WTC11 (cell line): ENCODE measurements at regions of chr11 and their contacts with region 1.

Region 1: GRCh38 chr11:57800444-57801182 is 39.0 kb downstream of the CTNND1 start:
- DNase-seq: no peak
- ATAC-seq: peak; percentile 93
- H3K4me3 Mint-ChIP-seq: no peak overlapping the region
- H3K27ac Mint-ChIP-seq: peak overlapping the region; percentile 97
- H3K4me1 Mint-ChIP-seq: peaks cover 18% of the 10 kb centered on the region
- H3K27me3 Mint-ChIP-seq: no peaks in the 10 kb centered on the region
- CTCF ChIP-seq: peak; percentile 51

Region 2: DNA sequence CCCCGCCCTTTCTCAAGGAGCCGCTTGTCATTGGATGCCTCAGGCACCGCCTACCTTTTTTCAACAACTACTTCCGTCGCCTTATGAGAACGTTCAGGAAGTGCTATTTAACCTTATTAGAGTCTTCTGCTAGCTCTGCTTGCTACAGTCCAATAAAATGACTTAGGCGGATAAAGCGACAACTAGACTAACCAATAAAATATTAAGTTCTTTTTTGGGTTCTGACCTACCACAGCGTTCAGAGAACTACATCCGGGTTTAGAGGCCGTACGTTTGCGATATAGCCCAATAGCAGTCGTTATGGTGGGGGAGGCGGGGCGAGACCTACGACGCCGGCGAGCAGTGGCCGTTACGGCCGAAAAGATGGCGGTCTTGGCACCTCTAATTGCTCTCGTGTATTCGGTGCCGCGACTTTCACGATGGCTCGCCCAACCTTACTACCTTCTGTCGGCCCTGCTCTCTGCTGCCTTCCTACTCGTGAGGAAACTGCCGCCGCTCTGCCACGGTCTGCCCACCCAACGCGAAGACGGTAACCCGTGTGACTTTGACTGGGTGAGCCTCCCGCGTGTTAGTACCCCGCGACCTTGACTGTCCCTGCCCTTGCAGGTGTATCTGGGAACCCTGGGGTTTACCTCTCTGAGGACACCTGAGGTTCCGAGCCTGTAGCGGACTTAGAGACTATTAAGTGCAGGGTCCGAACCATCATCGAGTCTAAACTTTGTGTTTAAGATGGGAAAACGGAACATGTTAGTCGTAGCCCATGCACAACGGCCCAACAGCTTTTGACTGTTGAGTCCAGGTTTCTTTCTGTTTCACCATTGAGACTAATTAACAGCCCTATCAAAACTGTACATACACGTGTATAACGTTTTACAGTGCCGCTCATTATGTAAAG is 88.1 kb before region 1 on chr11 and contains the start of gene TMX2:
- CTCF ChIA-PET with region 1: interaction called, 31 read pairs
- POLR2A ChIA-PET with region 1: interaction called, 4 read pairs
- DNase-seq: peak; percentile 89
- ATAC-seq: peak; percentile 88
- H3K4me3 Mint-ChIP-seq: peak within 1 kb of the TSS; percentile 100
- H3K27ac Mint-ChIP-seq: peak within 1 kb of the TSS; percentile 99
- H3K4me1 Mint-ChIP-seq: peaks cover 26% of the 10 kb centered on the region
- H3K27me3 Mint-ChIP-seq: no peaks in the 10 kb centered on the region
- CTCF ChIP-seq: no peak
- total RNA-seq, gene TMX2: 84.9 to 85.7 TPM (median 85.4 TPM) in 3 replicates

Region 3: GRCh38 chr11:57741132-57742086 is 59.2 kb before region 1 on chr11 and contains the start of gene SELENOH:
- CTCF ChIA-PET with region 1: interaction called, 42 read pairs
- POLR2A ChIA-PET with region 1: interaction called, 15 read pairs
- DNase-seq: peak; percentile 98
- ATAC-seq: peak; percentile 96
- H3K4me3 Mint-ChIP-seq: peak within 1 kb of the TSS; percentile 94
- H3K27ac Mint-ChIP-seq: peak within 1 kb of the TSS; percentile 97
- H3K4me1 Mint-ChIP-seq: peaks cover 15% of the 10 kb centered on the region
- H3K27me3 Mint-ChIP-seq: no peaks in the 10 kb centered on the region
- CTCF ChIP-seq: no peak
- total RNA-seq, gene SELENOH: 251 to 266 TPM (median 259 TPM) in 3 replicates

Region 4: DNA sequence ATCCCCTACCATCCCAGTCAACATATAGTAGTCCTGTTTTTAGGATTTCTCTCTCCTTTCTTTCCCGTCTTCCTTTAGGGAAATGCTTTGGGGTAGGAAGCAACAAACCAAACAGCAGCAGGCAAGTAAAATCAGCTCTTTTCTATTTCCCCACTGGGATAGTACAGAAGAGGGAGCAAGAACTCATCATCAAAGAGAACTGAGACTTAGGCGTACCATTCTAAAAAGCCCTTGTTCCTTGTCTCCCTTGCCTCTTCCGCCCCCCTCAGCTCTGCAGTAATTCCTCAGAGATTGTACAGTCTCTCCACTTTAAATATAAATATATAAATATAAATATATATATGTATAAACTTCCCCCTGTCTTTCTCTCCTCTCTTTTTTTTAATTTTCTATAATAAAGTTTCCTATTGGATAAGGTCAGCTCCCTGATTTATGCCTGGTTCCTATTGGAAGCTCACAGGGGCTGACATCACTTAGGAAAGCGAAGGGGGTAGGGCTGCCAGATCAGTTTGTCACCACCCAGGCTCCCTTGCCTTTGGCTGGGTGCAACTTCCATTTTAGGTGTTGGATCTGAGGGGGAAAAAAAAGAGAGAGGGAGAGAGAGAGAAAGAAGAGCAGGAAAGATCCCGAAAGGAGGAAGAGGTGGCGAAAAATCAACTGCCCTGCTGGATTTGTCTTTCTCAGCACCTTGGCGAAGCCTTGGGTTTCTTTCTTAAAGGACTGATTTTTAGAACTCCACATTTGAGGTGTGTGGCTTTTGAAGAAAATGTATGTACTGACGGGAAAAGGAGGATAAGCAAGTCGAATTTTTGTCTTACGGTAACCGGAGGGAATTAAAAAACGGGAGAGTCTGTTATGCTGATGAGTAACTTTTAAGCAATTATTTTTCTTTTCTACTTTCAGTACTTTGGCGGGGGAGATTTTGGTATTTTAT is 39.0 kb before region 1 on chr11 and contains the start of gene CTNND1:
- CTCF ChIA-PET with region 1: interaction called, 110 read pairs
- POLR2A ChIA-PET with region 1: interaction called, 11 read pairs
- DNase-seq: peak; percentile 74
- ATAC-seq: peak; percentile 96
- H3K4me3 Mint-ChIP-seq: peak within 1 kb of the TSS; percentile 99
- H3K27ac Mint-ChIP-seq: peak within 1 kb of the TSS; percentile 100
- H3K4me1 Mint-ChIP-seq: peaks cover 34% of the 10 kb centered on the region
- H3K27me3 Mint-ChIP-seq: no peaks in the 10 kb centered on the region
- CTCF ChIP-seq: no peak
- total RNA-seq, gene CTNND1: 164 to 165 TPM (median 164 TPM) in 3 replicates

Region 5: GRCh38 chr11:57778318-57779037 is 22.1 kb before region 1 on chr11:
- CTCF ChIA-PET with region 1: interaction called, 61 read pairs
- POLR2A ChIA-PET with region 1: interaction called, 21 read pairs
- DNase-seq: peak; percentile 80
- ATAC-seq: peak; percentile 77
- H3K4me3 Mint-ChIP-seq: peak overlapping the region; percentile 51
- H3K27ac Mint-ChIP-seq: peak overlapping the region; percentile 99
- H3K4me1 Mint-ChIP-seq: peaks cover 91% of the 10 kb centered on the region
- H3K27me3 Mint-ChIP-seq: no peaks in the 10 kb centered on the region
- CTCF ChIP-seq: no peak

Region 6: DNA sequence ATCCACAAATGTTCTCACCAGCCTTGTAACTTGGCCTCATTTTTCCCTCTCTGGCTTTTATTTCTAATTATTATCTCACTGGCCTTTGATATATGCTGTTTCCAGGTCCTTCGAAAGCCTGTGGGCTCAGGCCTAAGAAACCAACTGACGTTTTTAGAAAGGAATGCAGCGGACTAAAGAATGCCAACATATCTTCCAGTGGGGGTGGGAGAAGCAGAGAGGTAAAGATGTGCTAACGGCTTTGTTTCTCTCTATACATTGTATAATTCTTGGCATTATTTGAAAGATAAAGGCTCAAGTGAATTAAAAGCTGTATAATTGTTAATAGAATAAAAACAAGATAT is 258.4 kb after region 1 on chr11:
- CTCF ChIA-PET with region 1: interaction called, 18 read pairs
- POLR2A ChIA-PET with region 1: no interaction called
- DNase-seq: no peak
- ATAC-seq: peak; percentile 51
- H3K4me3 Mint-ChIP-seq: no peak overlapping the region
- H3K27ac Mint-ChIP-seq: 0 out of 2 replicates have a peak overlapping the region, but pooled peaks have one; percentile 49
- H3K4me1 Mint-ChIP-seq: peaks cover 47% of the 10 kb centered on the region
- H3K27me3 Mint-ChIP-seq: no peaks in the 10 kb centered on the region
- CTCF ChIP-seq: no peak